Ascending aorta (tissue), 2 donors: ENCODE measurements at regions of chr22 and their contacts with region 1.

Region 1: GRCh38 chr22:38927033-38927781 is 30.2 kb upstream of the APOBEC3A start:
- DNase-seq: peak in 1 of 2 donors; percentile 88
- H3K4me3 ChIP-seq: peak overlapping the region; percentile 56 to 61
- H3K27ac ChIP-seq: peak overlapping the region; percentile 76 to 80
- H3K4me1 ChIP-seq: peaks cover 4 to 18% of the 10 kb centered on the region in 2 donors
- H3K27me3 ChIP-seq: no peaks in the 10 kb centered on the region
- CTCF ChIP-seq: peak; percentile 33 to 83 (median 74)

Region 2: DNA sequence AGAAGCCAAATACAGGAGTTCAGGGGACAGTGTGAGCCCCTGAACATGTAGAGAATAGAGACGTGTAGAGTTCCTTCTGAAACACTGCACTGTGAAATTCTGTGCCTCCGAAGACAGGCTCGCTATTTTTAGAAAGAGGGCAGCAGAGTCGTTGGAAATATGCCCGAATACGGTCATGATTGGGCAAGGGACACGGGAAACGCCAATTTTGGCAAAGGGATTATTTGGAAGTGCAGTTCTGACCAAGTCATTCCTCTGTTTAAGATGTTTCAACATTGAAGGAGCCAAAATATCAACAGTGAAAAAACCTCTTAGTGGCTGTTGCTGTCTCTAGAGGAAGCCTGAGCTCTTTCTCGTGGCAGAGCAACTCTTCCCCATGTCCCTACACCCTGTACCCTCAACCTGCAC is 45.7 kb before region 1 on chr22:
- intact Hi-C with region 1: loop called (anchors 1 kb)
- DNase-seq: peak in 1 of 2 donors; percentile 91
- H3K4me3 ChIP-seq: peak overlapping the region in 1 of 2 donors; percentile 51
- H3K27ac ChIP-seq: peak overlapping the region; percentile 89 to 91
- H3K4me1 ChIP-seq: peaks cover 13 to 26% of the 10 kb centered on the region in 2 donors
- H3K27me3 ChIP-seq: no peaks in the 10 kb centered on the region
- CTCF ChIP-seq: no peak

Region 3: GRCh38 chr22:39349506-39349966 is 422.3 kb after region 1 on chr22:
- intact Hi-C with region 1: no loop called
- DNase-seq: no peak
- H3K4me3 ChIP-seq: peak overlapping the region; percentile 72 to 96
- H3K27ac ChIP-seq: no peak overlapping the region
- H3K4me1 ChIP-seq: peaks cover 0 to 2% of the 10 kb centered on the region in 2 donors
- H3K27me3 ChIP-seq: no peaks in the 10 kb centered on the region
- CTCF ChIP-seq: no peak